ENCODE measurements at regions of chr13 and their contacts with region 1.

Region 1: DNA sequence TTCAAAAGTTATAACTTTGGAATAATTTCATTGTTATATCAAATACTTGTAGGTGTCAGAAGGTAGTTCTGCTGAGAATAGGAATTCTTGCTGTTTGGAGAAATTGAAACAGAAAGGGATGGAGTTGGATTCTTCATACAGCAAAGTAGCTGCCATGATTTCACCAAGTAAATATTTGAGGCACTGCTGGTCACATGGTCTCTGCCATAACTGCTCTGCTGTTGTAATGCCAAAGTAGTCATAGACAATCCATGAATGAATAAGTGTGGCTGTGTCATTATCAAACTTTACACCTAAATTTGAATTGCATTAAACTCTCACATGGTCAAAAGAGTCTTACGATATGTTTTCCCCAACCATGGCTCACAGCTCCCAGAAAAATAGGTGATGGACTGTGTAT is 308.6 kb downstream of the GPC6 start:
- DNase-seq: no peak
- H3K4me3 ChIP-seq: no peak overlapping the region
- H3K27ac ChIP-seq: no peak overlapping the region
- H3K4me1 ChIP-seq: no peaks in the 10 kb centered on the region
- H3K27me3 ChIP-seq: no peaks in the 10 kb centered on the region
- CTCF ChIP-seq: no peak
- POLR2A ChIP-seq: no peak

Region 2: GRCh38 chr13:95457294-95457693 is 1922.0 kb after region 1 on chr13:
- intact Hi-C with region 1: loop called (anchors 10 kb)
- DNase-seq: no peak
- H3K4me3 ChIP-seq: no peak overlapping the region
- H3K27ac ChIP-seq: no peak overlapping the region
- H3K4me1 ChIP-seq: no peaks in the 10 kb centered on the region
- H3K27me3 ChIP-seq: no peaks in the 10 kb centered on the region
- CTCF ChIP-seq: no peak
- POLR2A ChIP-seq: no peak

Measured in breast epithelium (tissue), 4 donors.